Right cardiac atrium (tissue), 5 donors: ENCODE measurements at regions of chr10 and their contacts with region 1.

Region 1: DNA sequence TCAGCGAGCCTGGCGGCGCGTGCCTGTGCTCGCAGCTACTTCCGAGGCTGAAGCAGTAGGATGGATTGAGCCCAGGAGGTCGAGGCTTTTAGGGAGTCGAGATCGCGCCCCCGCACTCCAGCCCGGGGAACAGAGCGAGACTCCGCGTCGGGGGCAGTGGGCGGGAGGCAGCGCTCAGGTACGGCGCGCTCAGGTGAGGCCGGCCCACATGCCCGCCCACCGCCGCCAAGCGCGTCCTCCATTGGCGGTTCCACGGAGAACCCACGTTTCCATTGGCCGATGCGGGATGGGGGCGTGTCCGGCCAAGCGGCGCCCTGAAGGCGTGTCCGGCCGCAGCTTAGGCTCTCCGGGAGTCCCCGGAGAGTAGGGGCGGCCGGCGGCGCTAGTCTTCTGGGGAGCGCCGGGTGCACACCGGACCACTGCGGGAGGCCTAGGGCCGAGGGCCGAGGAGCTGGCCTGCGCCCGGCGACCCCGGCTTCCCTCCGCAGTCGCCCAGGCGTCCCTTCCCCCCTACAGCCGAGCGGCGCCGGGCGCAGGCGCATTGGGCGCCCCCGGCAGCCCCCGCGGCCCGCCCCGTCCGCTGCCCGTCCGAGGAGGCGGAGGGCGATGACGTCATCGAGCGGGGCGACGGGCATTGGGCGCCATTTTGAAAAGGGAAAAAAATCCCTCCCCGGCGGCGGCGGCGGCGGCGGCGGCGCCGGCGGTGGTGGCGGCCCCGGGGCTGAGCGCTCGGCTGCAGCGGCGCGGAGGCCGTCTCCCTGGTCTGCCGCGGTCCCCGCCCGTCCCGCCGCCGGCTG is at the start of gene PPP2R2D:
- DNase-seq: peak; percentile 94 to 97 (median 97)
- ATAC-seq: peak; percentile 97 to 98
- H3K4me3 ChIP-seq: peak within 1 kb of the TSS; percentile 99
- H3K27ac ChIP-seq: peak within 1 kb of the TSS; percentile 66
- H3K4me1 ChIP-seq: peaks cover 10% of the 10 kb centered on the region
- H3K27me3 ChIP-seq: no peaks in the 10 kb centered on the region
- total RNA-seq, gene PPP2R2D: 30.1 to 38.2 (median 36.2) TPM

Region 2: GRCh38 chr10:131769571-131770410 is 130.8 kb before region 1 on chr10:
- intact Hi-C with region 1: no loop called
- DNase-seq: no peak
- ATAC-seq: no peak
- H3K4me3 ChIP-seq: no peak overlapping the region
- H3K27ac ChIP-seq: no peak overlapping the region
- H3K4me1 ChIP-seq: no peaks in the 10 kb centered on the region
- H3K27me3 ChIP-seq: no peaks in the 10 kb centered on the region

Region 3: DNA sequence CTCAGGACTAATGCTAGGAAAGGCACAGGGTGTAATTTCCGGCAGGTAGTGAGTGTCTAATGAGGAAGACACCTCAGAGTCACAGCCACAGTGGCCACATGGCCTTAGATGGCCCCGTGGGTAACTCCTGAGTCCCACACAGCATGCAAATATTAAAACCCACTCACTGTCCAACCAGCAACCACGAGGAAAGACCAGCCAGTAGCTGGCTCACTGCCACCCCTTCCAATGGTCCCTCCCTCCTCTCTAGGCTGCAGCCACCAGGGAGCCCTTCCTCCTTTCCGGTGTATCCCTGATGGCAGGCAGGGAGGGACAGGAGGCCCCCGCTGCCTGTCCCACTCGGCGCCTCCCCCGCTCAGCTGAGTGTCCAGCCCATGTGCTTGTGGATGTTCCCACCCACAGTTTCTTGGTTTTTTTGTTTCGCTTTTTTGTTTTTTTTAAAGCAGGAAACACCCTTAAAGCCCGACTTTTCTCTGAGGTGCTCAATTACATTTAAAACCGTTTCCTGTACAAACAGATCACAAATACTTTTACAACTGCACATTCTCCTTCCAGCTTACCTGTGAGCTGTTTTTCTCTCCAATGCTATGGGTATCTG is 72.0 kb after region 1 on chr10:
- intact Hi-C with region 1: loop called in 1 of 4 experiments (anchors 10 kb)
- DNase-seq: peak; percentile 75 to 89 (median 87)
- ATAC-seq: peak; percentile 83 to 88
- H3K4me3 ChIP-seq: no peak overlapping the region
- H3K27ac ChIP-seq: no peak overlapping the region
- H3K4me1 ChIP-seq: peaks cover 8% of the 10 kb centered on the region
- H3K27me3 ChIP-seq: no peaks in the 10 kb centered on the region